HCT116 (cell line): ENCODE measurements at regions of chr2 and their contacts with region 1.

Region 1: GRCh38 chr2:189798312-189799029 is 14.2 kb downstream of the PMS1 start:
- DNase-seq: peak; percentile 12
- ATAC-seq: peak; percentile 63; the same call in 1 of the 2 replicates
- H3K4me3 ChIP-seq: no peak overlapping the region
- H3K27ac ChIP-seq: no peak overlapping the region
- H3K4me1 ChIP-seq: no peaks in the 10 kb centered on the region
- H3K27me3 ChIP-seq: no peaks in the 10 kb centered on the region
- CTCF ChIP-seq: peak; percentile 42 to 53 (median 46); a peak in 4 of 6 replicates
- POLR2A ChIP-seq: no peak
- RAD21 ChIP-seq: peak; percentile 69

Region 2: DNA sequence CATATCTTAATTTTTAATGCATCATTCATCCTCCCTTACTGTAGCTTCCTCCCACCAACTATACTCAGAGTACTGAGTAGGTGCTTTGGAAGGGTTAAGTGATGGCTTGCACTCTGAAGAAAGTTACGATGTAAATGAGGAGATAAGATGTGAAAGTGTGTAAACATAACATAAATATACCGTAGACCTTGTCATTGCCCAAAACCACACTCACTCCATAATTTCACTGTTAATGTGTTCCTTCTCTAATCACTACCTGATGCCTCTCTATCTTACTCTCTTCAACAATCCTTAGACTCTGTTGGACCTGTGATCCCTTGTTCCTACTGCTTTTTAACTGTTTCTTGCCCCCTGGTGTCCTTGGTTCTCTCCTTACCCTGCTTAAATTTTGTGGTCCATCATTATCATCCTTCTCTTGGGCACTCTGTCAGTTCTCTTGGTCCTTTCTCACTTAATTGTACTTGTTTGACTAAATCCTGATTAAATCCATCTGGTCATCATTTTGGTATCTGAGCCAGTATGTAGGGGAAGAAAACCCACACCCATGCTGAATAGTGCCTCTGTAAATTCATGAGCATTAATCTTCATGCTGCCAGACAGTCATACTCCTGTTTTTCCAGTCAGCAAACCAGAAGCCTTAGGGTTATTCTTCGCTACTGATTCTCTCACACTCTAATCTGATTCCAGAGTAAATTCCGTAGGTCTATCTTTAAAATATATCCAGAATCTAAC is 30.8 kb after region 1 on chr2:
- CTCF ChIA-PET with region 1: interaction called, 10 read pairs
- POLR2A ChIA-PET with region 1: no interaction called
- RAD21 ChIA-PET with region 1: no interaction called
- intact Hi-C with region 1: no loop called
- DNase-seq: no peak
- ATAC-seq: no peak
- H3K4me3 ChIP-seq: no peak overlapping the region
- H3K27ac ChIP-seq: no peak overlapping the region
- H3K4me1 ChIP-seq: no peaks in the 10 kb centered on the region
- H3K27me3 ChIP-seq: no peaks in the 10 kb centered on the region
- CTCF ChIP-seq: no peak
- POLR2A ChIP-seq: no peak
- RAD21 ChIP-seq: no peak

Region 3: DNA sequence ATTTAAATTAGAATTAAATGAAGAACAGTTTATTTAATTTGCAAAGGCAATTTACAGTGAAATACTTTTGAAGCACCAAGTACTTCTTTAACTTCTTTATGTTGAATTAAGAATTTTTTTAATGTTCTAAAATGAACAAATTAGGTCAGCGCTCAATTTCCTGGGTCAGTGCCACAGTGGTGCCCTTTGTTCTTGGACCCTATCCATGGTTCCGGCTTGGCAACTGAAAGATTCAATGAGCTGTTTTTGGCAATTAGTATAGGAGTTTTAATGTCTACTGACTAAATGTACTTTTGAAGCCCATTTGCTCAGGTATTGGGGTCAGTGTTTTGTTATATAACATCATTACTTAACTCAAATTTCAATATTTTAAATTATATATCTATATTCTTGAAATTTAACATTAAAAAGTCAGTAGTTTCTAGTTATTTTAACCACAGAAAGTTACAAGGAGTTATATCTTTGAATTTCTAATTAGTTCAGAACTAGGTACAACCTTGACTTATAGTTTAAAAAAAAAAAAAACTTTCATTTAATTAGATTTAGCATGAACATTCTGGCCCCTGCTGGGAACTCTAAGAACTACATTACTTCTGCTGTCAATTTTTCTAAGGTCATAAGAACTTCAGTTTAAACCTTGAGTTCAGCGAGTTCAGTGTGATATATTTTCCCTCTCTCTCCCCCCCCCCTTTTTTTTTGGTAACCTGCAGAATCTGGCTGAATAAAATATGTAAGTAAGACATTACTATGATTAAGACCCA is 271.6 kb after region 1 on chr2:
- CTCF ChIA-PET with region 1: interaction called, 11 read pairs
- POLR2A ChIA-PET with region 1: no interaction called
- RAD21 ChIA-PET with region 1: interaction called in 1 of 2 experiments, 6 read pairs
- intact Hi-C with region 1: loop called (anchors 1 kb)
- DNase-seq: peak; percentile 71
- ATAC-seq: 0 out of 2 replicates have a peak, but pooled peaks have one; percentile 32
- H3K4me3 ChIP-seq: no peak overlapping the region
- H3K27ac ChIP-seq: no peak overlapping the region
- H3K4me1 ChIP-seq: no peaks in the 10 kb centered on the region
- H3K27me3 ChIP-seq: no peaks in the 10 kb centered on the region
- CTCF ChIP-seq: peak; percentile 48 to 89 (median 58)
- POLR2A ChIP-seq: no peak
- RAD21 ChIP-seq: peak; percentile 85

Region 4: GRCh38 chr2:190319555-190320498 is 521.4 kb after region 1 on chr2 and contains the start of gene HIBCH:
- CTCF ChIA-PET with region 1: no interaction called
- POLR2A ChIA-PET with region 1: no interaction called
- RAD21 ChIA-PET with region 1: no interaction called
- intact Hi-C with region 1: loop called (anchors 10 kb)
- DNase-seq: peak; percentile 99
- ATAC-seq: peak; percentile 97
- H3K4me3 ChIP-seq: peak within 1 kb of the TSS; percentile 85 to 89
- H3K27ac ChIP-seq: peak within 1 kb of the TSS; percentile 50
- H3K4me1 ChIP-seq: peaks cover 6 to 16% of the 10 kb centered on the region in 2 experiments; a peak in 3 of 4 replicates
- H3K27me3 ChIP-seq: no peaks in the 10 kb centered on the region
- CTCF ChIP-seq: peak; percentile 70 to 89 (median 76)
- POLR2A ChIP-seq: peak; percentile 44
- RAD21 ChIP-seq: peak; percentile 43
- total RNA-seq, gene HIBCH: 24.7 TPM